ENCODE measurements at regions of chr7 and their contacts with region 1.

Region 1: DNA sequence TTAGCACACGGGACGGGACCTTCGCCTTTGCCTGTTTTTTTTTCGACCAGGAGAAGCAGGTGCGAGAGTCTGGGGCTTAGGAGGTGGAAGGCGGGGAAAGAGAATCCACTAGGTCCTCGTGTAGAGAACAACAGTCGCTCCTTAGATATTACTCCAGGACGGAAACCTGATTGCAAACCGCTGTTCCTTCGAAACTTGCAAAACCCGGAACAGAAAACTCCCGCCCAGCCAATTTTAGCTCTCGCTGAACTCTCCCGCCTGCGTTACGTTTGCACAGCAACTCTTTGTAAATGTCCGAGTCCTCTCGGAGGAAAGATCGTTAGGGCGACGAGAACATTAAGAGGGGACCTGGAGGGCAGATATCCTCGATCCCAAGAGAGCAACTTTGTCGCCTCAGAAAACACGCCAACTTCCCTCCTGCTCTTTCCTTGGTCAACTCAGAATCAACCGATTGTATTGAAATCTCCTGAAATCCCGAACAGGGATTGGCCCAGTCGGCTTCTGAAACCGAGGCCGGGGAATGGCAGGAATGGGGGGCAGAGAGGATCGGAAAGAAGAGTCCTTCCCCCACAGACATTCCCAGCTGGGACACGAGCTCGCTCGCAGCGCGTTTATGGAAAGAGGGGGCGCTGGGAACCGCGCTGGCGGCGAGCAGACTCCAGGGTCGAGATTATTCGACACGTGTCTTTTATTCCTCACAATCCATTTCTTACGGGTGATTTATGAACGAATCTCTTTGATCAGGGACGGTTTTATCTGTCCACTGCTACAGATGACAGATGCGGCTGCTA is 9.9 kb downstream of the TWIST1 start:
- DNase-seq: peak in 1 of 2 donors; percentile 75
- H3K4me3 ChIP-seq: peak overlapping the region; percentile 69 to 74
- H3K27ac ChIP-seq: peak overlapping the region; percentile 54 to 80
- H3K4me1 ChIP-seq: peaks cover 3 to 8% of the 10 kb centered on the region in 2 donors
- H3K27me3 ChIP-seq: no peaks in the 10 kb centered on the region
- CTCF ChIP-seq: no peak

Region 2: DNA sequence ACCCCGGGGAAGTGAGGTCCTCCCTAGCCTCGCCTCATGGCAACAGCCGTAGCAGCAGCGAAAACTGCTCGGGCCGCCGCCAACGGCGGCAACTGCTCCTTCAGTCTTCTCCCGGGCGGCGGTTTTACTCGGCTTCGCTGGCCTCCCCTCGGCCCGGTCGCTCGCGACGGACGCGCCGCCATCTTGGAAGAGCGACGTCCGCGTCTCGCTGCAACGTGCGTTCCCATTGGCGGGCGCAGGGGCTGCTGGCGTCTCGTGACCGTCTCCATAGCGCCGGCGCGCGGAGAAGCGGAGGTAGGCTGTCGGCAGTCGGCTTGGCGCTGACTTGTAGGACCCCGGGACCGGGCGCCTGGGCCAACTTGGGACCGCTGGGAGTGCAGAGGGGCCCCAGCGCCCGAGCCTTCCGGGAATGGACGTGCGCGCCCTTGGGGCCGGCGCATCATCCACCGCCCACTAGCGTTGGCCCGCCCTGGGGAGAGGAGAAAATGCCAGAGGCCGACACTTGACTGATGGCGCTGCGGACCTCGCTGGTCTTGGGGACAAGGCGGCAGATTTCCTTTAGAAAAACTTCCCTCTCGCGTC is 1167.2 kb before region 1 on chr7 and contains the start of gene SNX13:
- intact Hi-C with region 1: loop called (anchors 5 kb)
- DNase-seq: peak; percentile 74 to 95
- H3K4me3 ChIP-seq: peak within 1 kb of the TSS; percentile 85 to 98
- H3K27ac ChIP-seq: peak within 1 kb of the TSS; percentile 95 to 99
- H3K4me1 ChIP-seq: peaks cover 0 to 27% of the 10 kb centered on the region in 2 donors
- H3K27me3 ChIP-seq: no peaks in the 10 kb centered on the region
- CTCF ChIP-seq: peak in 2 of 3 experiments; percentile 21 to 35
- total RNA-seq, gene SNX13: 26.2 TPM

Region 3: DNA sequence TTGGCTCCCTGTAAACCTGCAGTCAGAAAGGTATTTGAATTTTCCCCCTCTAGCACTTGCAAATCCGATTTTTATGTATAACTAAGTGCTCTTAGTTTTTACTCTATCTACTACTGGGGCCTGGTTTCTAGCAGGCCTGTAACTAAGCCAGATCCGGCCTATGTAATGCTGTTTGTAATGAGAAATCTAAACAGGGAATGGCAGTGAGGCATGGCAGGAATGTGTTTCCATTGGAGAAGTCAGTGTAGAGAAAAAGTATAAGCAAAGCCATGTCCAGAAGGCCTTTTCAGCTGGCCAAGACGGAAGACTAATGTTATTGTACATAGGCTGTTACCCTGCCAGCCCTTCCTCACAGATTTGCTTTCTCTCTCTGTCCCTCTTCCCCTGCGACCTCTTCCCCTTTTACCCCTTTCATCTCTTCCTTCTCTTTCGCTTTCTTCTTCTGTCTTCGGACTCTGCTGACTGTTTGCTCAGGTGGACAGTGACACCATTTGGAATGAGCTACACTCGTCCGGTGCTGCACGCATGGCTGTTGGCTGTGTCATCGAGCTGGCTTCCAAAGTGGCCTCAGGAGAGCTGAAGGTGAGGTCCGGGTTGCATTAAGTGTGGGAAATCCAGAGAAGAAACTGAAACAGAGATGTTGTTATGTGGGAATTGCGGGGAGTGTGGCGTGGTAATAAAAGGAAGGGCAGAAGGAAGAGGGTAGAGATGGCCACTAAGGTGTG is 314.5 kb before region 1 on chr7:
- intact Hi-C with region 1: loop called (anchors 5 kb)
- DNase-seq: no peak
- H3K4me3 ChIP-seq: peak overlapping the region; percentile 29 to 54
- H3K27ac ChIP-seq: peak overlapping the region; percentile 69 to 75
- H3K4me1 ChIP-seq: peaks cover 0 to 20% of the 10 kb centered on the region in 2 donors
- H3K27me3 ChIP-seq: no peaks in the 10 kb centered on the region
- CTCF ChIP-seq: no peak

Region 4: DNA sequence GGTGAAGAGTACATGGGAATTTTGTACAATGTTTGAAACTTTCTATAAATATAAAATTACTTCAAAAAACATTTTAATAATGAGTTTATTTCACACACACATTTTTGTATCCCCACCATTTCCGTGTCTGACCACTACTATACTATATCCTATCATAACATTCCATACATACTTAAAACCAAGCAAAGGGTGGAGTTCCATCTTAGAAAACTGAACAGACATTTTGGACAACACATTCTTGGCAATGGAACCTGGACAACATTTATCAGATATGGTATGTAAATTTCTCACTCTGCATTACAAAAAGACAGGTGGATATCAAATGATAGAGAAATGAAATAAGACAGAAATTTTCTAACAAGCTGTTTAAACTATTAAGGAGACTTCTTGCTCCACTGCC is 159.0 kb before region 1 on chr7:
- intact Hi-C with region 1: no loop called
- DNase-seq: no peak
- H3K4me3 ChIP-seq: no peak overlapping the region
- H3K27ac ChIP-seq: no peak overlapping the region
- H3K4me1 ChIP-seq: no peaks in the 10 kb centered on the region
- H3K27me3 ChIP-seq: no peaks in the 10 kb centered on the region
- CTCF ChIP-seq: no peak

Region 5: GRCh38 chr7:18978108-18978495 is 129.4 kb before region 1 on chr7:
- intact Hi-C with region 1: loop called (anchors 5 kb)
- DNase-seq: no peak
- H3K4me3 ChIP-seq: no peak overlapping the region
- H3K27ac ChIP-seq: peak overlapping the region; percentile 59 to 64
- H3K4me1 ChIP-seq: peaks cover 0 to 30% of the 10 kb centered on the region in 2 donors
- H3K27me3 ChIP-seq: no peaks in the 10 kb centered on the region
- CTCF ChIP-seq: no peak

Measured in ascending aorta (tissue), 2 donors.